Psoas muscle (tissue), 8 donors: ENCODE measurements at regions of chr3 and their contacts with region 1.

Region 1: DNA sequence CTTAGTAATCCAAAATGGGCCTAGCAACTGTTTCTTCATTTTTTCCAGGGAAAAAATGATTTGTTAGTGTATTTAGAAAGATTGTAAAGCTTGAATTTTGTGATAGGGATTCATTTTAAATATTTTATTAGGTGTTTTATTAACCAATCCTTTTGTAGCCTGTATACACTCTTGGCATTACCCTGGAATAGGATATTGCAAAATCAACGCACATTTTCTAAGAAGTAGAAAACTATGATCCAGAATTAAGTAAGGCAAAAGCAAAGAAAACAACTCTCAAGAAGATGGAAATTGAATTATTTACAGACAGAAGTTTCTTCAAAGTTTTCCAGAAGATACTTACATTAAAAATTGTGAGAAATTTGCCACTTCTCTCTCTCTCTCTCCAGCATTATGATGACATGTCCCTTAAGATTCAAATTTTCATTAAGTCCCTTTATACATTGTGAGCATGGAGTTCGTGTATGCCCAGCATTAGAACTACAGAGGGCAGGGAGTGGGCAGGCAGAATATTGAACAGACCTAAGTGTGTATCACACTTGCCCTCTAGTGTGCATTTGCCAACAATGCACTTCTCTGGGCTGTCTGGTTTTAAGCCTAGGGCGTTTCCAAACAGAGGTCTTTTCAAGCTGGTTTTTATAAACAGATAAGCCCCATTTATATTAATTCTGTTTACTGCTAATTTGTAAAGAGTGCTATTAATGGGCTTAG is 28.5 kb upstream of the CMSS1 start:
- DNase-seq: no peak
- ATAC-seq: peak; percentile 82 to 88 (median 87)
- H3K4me3 ChIP-seq: no peak overlapping the region
- H3K27ac ChIP-seq: no peak overlapping the region
- H3K4me1 ChIP-seq: no peaks in the 10 kb centered on the region
- H3K27me3 ChIP-seq: no peaks in the 10 kb centered on the region
- CTCF ChIP-seq: peak; percentile 64

Region 2: GRCh38 chr3:99499235-99500158 is 289.7 kb before region 1 on chr3:
- intact Hi-C with region 1: loop called in 1 of 2 experiments (anchors 5 kb)
- DNase-seq: no peak
- ATAC-seq: peak in 3 of 4 donors; percentile 46 to 65 (median 47)
- H3K4me3 ChIP-seq: no peak overlapping the region
- H3K27ac ChIP-seq: no peak overlapping the region
- H3K4me1 ChIP-seq: no peaks in the 10 kb centered on the region
- H3K27me3 ChIP-seq: no peaks in the 10 kb centered on the region
- CTCF ChIP-seq: peak; percentile 66

Region 3: GRCh38 chr3:99645277-99646106 is 143.7 kb before region 1 on chr3:
- intact Hi-C with region 1: loop called in 1 of 2 experiments (anchors 5 kb)
- DNase-seq: no peak
- ATAC-seq: peak; percentile 21 to 68 (median 50)
- H3K4me3 ChIP-seq: no peak overlapping the region
- H3K27ac ChIP-seq: peak overlapping the region; percentile 42
- H3K4me1 ChIP-seq: no peaks in the 10 kb centered on the region
- H3K27me3 ChIP-seq: peaks cover 0 to 3% (median 0%) of the 10 kb centered on the region in 3 donors
- CTCF ChIP-seq: peak; percentile 56